ENCODE measurements at regions of chr1 and their contacts with region 1.

Region 1: GRCh38 chr1:23249787-23250454 is 32.6 kb upstream of the HTR1D start:
- DNase-seq: peak; percentile 26
- ATAC-seq: peak; percentile 64
- H3K4me3 ChIP-seq: no peak overlapping the region
- H3K27ac ChIP-seq: no peak overlapping the region
- H3K4me1 ChIP-seq: peaks cover 7% of the 10 kb centered on the region; the same call in 1 of the 2 replicates
- H3K27me3 ChIP-seq: no peaks in the 10 kb centered on the region
- CTCF ChIP-seq: no peak

Region 2: DNA sequence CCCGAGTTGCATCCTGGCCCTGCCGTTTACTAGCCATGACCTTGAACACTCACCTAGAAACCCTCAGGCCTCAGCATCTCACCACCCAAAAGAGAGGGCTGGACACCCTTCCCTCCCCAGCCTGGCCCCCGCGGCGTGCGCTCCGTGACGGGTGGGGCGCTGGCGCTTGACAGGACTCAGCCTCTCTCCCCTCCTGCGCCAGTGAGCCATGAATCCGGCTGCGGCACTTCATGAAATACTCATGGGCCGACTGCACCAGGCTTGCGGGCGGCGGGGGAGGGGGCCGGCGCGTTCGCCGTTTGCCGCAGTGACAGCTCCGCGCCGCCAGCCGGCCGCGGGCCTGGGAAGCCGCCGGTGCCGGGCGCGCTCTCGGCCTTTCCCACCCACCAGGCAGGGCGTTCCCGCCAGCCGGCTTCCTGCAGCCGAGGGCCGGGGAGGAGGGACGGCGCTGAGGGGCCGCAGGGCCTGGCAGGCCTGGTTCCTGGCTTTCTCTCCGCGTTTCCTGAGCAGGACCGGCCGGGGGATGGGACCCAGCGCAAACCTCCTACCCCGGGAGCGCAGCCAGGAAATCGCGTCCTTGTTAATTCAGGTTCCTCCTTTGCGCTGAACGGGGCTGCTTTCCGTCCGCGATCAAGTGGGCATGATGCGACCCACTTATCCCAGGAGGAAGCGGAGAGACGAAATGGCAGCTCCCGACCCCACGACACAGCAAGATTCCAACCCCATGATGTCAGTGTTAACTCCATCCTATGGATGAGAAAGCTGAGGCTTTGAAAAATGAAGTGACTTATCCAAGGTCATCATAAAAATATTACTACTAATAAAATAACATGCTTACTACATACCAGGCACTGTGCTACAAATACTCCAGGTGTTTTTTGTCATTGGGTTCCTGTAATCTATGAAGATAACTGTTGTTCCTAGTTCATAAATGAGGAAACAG is 72.2 kb before region 1 on chr1:
- CTCF ChIA-PET with region 1: interaction called, 11 read pairs
- POLR2A ChIA-PET with region 1: no interaction called
- intact Hi-C with region 1: no loop called
- DNase-seq: peak; percentile 67
- ATAC-seq: peak; percentile 81
- H3K4me3 ChIP-seq: peak overlapping the region; percentile 61
- H3K27ac ChIP-seq: no peak overlapping the region; the same call in 1 of the 2 replicates
- H3K4me1 ChIP-seq: peaks cover 5% of the 10 kb centered on the region; the same call in 1 of the 2 replicates
- H3K27me3 ChIP-seq: no peaks in the 10 kb centered on the region
- CTCF ChIP-seq: no peak

Region 3: GRCh38 chr1:23751050-23751814 is 501.3 kb after region 1 on chr1:
- CTCF ChIA-PET with region 1: no interaction called
- POLR2A ChIA-PET with region 1: no interaction called
- intact Hi-C with region 1: no loop called
- DNase-seq: peak; percentile 59
- ATAC-seq: peak; percentile 76
- H3K4me3 ChIP-seq: no peak overlapping the region
- H3K27ac ChIP-seq: no peak overlapping the region
- H3K4me1 ChIP-seq: no peaks in the 10 kb centered on the region
- H3K27me3 ChIP-seq: no peaks in the 10 kb centered on the region
- CTCF ChIP-seq: peak; percentile 82